Mammary epithelial cell (primary cell): ENCODE measurements at regions of chr10 and their contacts with region 1.

Region 1: GRCh38 chr10:27369880-27370279 is 129.3 kb upstream of the ACBD5 start:
- DNase-seq: no peak
- H3K4me3 ChIP-seq: no peak overlapping the region
- H3K27ac ChIP-seq: no peak overlapping the region
- H3K4me1 ChIP-seq: no peaks in the 10 kb centered on the region
- H3K27me3 ChIP-seq: no peaks in the 10 kb centered on the region
- CTCF ChIP-seq: peak; percentile 23 to 36

Region 2: DNA sequence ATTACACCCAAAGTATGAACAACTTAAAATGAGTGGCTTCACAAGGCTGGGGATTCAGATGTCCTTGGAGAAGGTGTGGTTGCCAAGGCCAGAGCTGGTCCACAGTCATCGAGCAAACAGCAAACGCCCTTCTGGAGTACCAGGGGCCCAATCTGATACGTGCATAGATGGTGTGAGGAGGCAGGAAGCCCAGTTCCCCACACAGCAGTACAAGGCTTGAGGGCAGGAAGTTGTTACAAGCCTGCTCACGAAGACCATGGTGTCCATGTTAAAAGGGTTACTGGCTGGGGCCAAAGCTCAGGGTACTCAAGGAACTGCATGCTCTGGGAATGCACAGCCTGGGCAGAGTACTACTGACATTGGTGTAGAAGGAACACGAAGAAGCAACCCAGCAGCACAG is 265.0 kb before region 1 on chr10:
- CTCF ChIA-PET with region 1: no interaction called
- dilution Hi-C with region 1: no loop called
- in situ Hi-C with region 1: no loop called
- intact Hi-C with region 1: no loop called
- DNase-seq: no peak
- H3K4me3 ChIP-seq: no peak overlapping the region
- H3K27ac ChIP-seq: no peak overlapping the region
- H3K4me1 ChIP-seq: peaks cover 5% of the 10 kb centered on the region
- H3K27me3 ChIP-seq: no peaks in the 10 kb centered on the region
- CTCF ChIP-seq: no peak

Region 3: GRCh38 chr10:27474741-27475140 is 104.9 kb after region 1 on chr10:
- CTCF ChIA-PET with region 1: no interaction called
- dilution Hi-C with region 1: loop called (anchors 5 kb)
- in situ Hi-C with region 1: no loop called
- intact Hi-C with region 1: no loop called
- DNase-seq: peak; percentile 76
- H3K4me3 ChIP-seq: no peak overlapping the region
- H3K27ac ChIP-seq: peak overlapping the region; percentile 76
- H3K4me1 ChIP-seq: peaks cover 25% of the 10 kb centered on the region
- H3K27me3 ChIP-seq: no peaks in the 10 kb centered on the region
- CTCF ChIP-seq: no peak

Region 4: DNA sequence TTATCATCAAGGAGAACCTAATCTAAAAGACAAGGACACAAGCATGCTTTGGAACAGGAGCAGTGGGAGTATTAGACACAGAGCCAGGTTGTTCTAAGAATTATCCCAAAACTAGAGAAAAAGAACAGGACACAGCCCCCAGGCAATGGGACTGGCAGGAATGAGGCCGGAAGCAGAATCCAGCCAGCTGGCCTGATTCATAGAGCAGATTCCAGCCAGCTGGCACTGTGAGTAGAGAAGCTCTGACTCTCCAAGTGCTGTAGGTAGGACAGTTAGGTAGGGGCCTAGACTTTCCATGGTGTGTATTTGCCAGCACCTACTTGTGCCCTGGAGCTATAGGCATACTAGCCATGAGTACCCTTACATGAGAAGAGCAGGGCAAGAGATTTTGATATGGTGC is 120.9 kb after region 1 on chr10:
- CTCF ChIA-PET with region 1: no interaction called
- dilution Hi-C with region 1: no loop called
- in situ Hi-C with region 1: no loop called
- intact Hi-C with region 1: loop called (anchors 1 kb)
- DNase-seq: peak; percentile 35
- H3K4me3 ChIP-seq: no peak overlapping the region
- H3K27ac ChIP-seq: no peak overlapping the region
- H3K4me1 ChIP-seq: peaks cover 12% of the 10 kb centered on the region
- H3K27me3 ChIP-seq: no peaks in the 10 kb centered on the region
- CTCF ChIP-seq: no peak

Region 5: GRCh38 chr10:27655296-27655695 is 285.4 kb after region 1 on chr10:
- CTCF ChIA-PET with region 1: interaction called, 17 read pairs
- dilution Hi-C with region 1: no loop called
- in situ Hi-C with region 1: no loop called
- intact Hi-C with region 1: loop called (anchors 2 kb)
- DNase-seq: no peak
- H3K4me3 ChIP-seq: no peak overlapping the region
- H3K27ac ChIP-seq: no peak overlapping the region
- H3K4me1 ChIP-seq: no peaks in the 10 kb centered on the region
- H3K27me3 ChIP-seq: no peaks in the 10 kb centered on the region
- CTCF ChIP-seq: no peak

Region 6: GRCh38 chr10:27661514-27662286 is 291.8 kb after region 1 on chr10:
- CTCF ChIA-PET with region 1: no interaction called
- dilution Hi-C with region 1: no loop called
- in situ Hi-C with region 1: no loop called
- intact Hi-C with region 1: loop called (anchors 2 kb)
- DNase-seq: peak; percentile 4
- H3K4me3 ChIP-seq: no peak overlapping the region
- H3K27ac ChIP-seq: no peak overlapping the region
- H3K4me1 ChIP-seq: no peaks in the 10 kb centered on the region
- H3K27me3 ChIP-seq: no peaks in the 10 kb centered on the region
- CTCF ChIP-seq: no peak